ENCODE measurements at regions of chr18 and their contacts with region 1.

Region 1: GRCh38 chr18:58615140-58616132 is 13.5 kb downstream of the ALPK2 start:
- DNase-seq: peak in 13 of 14 experiments; percentile 17 to 93 (median 37)
- ATAC-seq: peak; percentile 93
- H3K4me3 ChIP-seq: peak overlapping the region; percentile 34
- H3K4me3 Mint-ChIP-seq: peak overlapping the region; percentile 81
- H3K27ac ChIP-seq: peak overlapping the region; percentile 60 to 91
- H3K27ac Mint-ChIP-seq: peak overlapping the region; percentile 94
- H3K4me1 ChIP-seq: peaks cover 46% of the 10 kb centered on the region
- H3K4me1 Mint-ChIP-seq: peaks cover 53% of the 10 kb centered on the region
- H3K27me3 ChIP-seq: no peaks in the 10 kb centered on the region
- H3K27me3 Mint-ChIP-seq: no peaks in the 10 kb centered on the region
- CTCF ChIP-seq: no peak

Region 2: DNA sequence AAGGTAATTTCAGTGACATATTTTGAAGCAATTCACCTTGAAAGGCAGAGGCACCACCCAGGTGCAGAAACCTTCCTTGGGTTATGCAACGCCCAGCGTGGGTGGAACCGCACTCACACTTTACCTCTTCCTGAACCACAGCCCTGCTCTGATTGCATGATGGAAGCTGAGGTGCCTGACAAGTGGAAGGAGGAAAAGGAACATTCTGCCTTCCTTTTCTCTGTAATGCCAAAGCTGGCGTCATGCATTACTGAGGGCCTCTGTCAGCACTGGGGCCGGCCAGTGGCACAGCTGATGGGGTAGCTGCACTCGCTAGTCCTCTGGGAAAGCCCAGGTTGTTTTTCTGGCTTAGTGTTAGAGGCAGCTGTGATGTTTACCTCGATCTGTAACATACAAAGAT is 304.9 kb before region 1 on chr18:
- CTCF ChIA-PET with region 1: no interaction called
- POLR2A ChIA-PET with region 1: no interaction called
- intact Hi-C with region 1: no loop called
- DNase-seq: peak in 11 of 14 experiments; percentile 10 to 75 (median 37)
- ATAC-seq: peak; percentile 84
- H3K4me3 ChIP-seq: no peak overlapping the region
- H3K4me3 Mint-ChIP-seq: peak overlapping the region; percentile 77
- H3K27ac ChIP-seq: peak overlapping the region; percentile 24 to 38
- H3K27ac Mint-ChIP-seq: peak overlapping the region; percentile 76
- H3K4me1 ChIP-seq: peaks cover 38% of the 10 kb centered on the region
- H3K4me1 Mint-ChIP-seq: peaks cover 64% of the 10 kb centered on the region
- H3K27me3 ChIP-seq: no peaks in the 10 kb centered on the region
- H3K27me3 Mint-ChIP-seq: no peaks in the 10 kb centered on the region
- CTCF ChIP-seq: no peak

Region 3: GRCh38 chr18:58653814-58654509 is 38.5 kb after region 1 on chr18:
- CTCF ChIA-PET with region 1: interaction called, 3 read pairs
- POLR2A ChIA-PET with region 1: interaction called, 12 read pairs
- intact Hi-C with region 1: loop called (anchors 1 to 5 kb)
- DNase-seq: no peak
- ATAC-seq: no peak
- H3K4me3 ChIP-seq: no peak overlapping the region
- H3K4me3 Mint-ChIP-seq: peak overlapping the region; percentile 2
- H3K27ac ChIP-seq: no peak overlapping the region
- H3K27ac Mint-ChIP-seq: peak overlapping the region; percentile 31
- H3K4me1 ChIP-seq: peaks cover 47% of the 10 kb centered on the region
- H3K4me1 Mint-ChIP-seq: peaks cover 88% of the 10 kb centered on the region
- H3K27me3 ChIP-seq: no peaks in the 10 kb centered on the region
- H3K27me3 Mint-ChIP-seq: no peaks in the 10 kb centered on the region
- CTCF ChIP-seq: no peak

Region 4: GRCh38 chr18:58661423-58661822 is 46.0 kb after region 1 on chr18:
- CTCF ChIA-PET with region 1: interaction called, 3 read pairs
- POLR2A ChIA-PET with region 1: interaction called, 12 read pairs
- intact Hi-C with region 1: loop called (anchors 1 to 5 kb)
- DNase-seq: no peak
- ATAC-seq: no peak
- H3K4me3 ChIP-seq: no peak overlapping the region
- H3K4me3 Mint-ChIP-seq: no peak overlapping the region
- H3K27ac ChIP-seq: no peak overlapping the region
- H3K27ac Mint-ChIP-seq: no peak overlapping the region
- H3K4me1 ChIP-seq: peaks cover 29% of the 10 kb centered on the region
- H3K4me1 Mint-ChIP-seq: peaks cover 71% of the 10 kb centered on the region
- H3K27me3 ChIP-seq: no peaks in the 10 kb centered on the region
- H3K27me3 Mint-ChIP-seq: no peaks in the 10 kb centered on the region
- CTCF ChIP-seq: no peak

Measured in CD4-positive, alpha-beta T cell (primary cell).